ENCODE measurements at regions of chr2 and their contacts with region 1.

Region 1: GRCh38 chr2:101697124-101698013 is at the start of gene MAP4K4:
- DNase-seq: peak; percentile 71 to 87 (median 78)
- H3K4me3 ChIP-seq: peak within 1 kb of the TSS; percentile 62 to 92 (median 78)
- H3K27ac ChIP-seq: peak within 1 kb of the TSS; percentile 75 to 98 (median 96)
- H3K27me3 ChIP-seq: no peaks in the 10 kb centered on the region
- CTCF ChIP-seq: peak in 54 of 56 donors; percentile 13 to 74 (median 50)
- total RNA-seq, gene MAP4K4: 137 to 701 (median 262) TPM

Region 2: GRCh38 chr2:101341901-101342624 is 355.3 kb before region 1 on chr2:
- intact Hi-C with region 1: loop called in 1 of 2 experiments (anchors 10 kb)
- DNase-seq: peak; percentile 46 to 86 (median 79)
- H3K4me3 ChIP-seq: peak overlapping the region in 12 of 59 donors; percentile 8 to 31 (median 18)
- H3K27ac ChIP-seq: peak overlapping the region in 14 of 59 donors; percentile 7 to 87 (median 36)
- H3K27me3 ChIP-seq: no peaks in the 10 kb centered on the region
- CTCF ChIP-seq: peak; percentile 65 to 94 (median 87)

Region 3: GRCh38 chr2:101533561-101534148 is 163.7 kb before region 1 on chr2:
- intact Hi-C with region 1: loop called (anchors 1 to 2 kb)
- DNase-seq: peak in 9 of 10 donors; percentile 70 to 93 (median 87)
- H3K4me3 ChIP-seq: peak overlapping the region in 40 of 59 donors; percentile 2 to 53 (median 21)
- H3K27ac ChIP-seq: peak overlapping the region; percentile 71 to 99 (median 96)
- H3K27me3 ChIP-seq: no peaks in the 10 kb centered on the region
- CTCF ChIP-seq: peak in 6 of 56 donors; percentile 10 to 32 (median 20)

Region 4: GRCh38 chr2:101741775-101742520 is 44.6 kb after region 1 on chr2:
- intact Hi-C with region 1: loop called (anchors 5 kb)
- DNase-seq: no peak
- H3K4me3 ChIP-seq: peak overlapping the region in 29 of 59 donors; percentile 0 to 45 (median 18)
- H3K27ac ChIP-seq: peak overlapping the region; percentile 60 to 98 (median 93)
- H3K27me3 ChIP-seq: no peaks in the 10 kb centered on the region
- CTCF ChIP-seq: peak in 1 of 56 donors; percentile 12

Region 5: GRCh38 chr2:101818531-101819451 is 121.4 kb after region 1 on chr2:
- intact Hi-C with region 1: loop called in 1 of 2 experiments (anchors 5 kb)
- DNase-seq: peak in 3 of 10 donors; percentile 20 to 51 (median 38)
- H3K4me3 ChIP-seq: peak overlapping the region in 24 of 59 donors; percentile 0 to 53 (median 22)
- H3K27ac ChIP-seq: peak overlapping the region in 58 of 59 donors; percentile 38 to 96 (median 88)
- H3K27me3 ChIP-seq: no peaks in the 10 kb centered on the region
- CTCF ChIP-seq: peak in 17 of 56 donors; percentile 5 to 47 (median 19)